Calu3 (cell line): ENCODE measurements at regions of chr22 and their contacts with region 1.

Region 1: DNA sequence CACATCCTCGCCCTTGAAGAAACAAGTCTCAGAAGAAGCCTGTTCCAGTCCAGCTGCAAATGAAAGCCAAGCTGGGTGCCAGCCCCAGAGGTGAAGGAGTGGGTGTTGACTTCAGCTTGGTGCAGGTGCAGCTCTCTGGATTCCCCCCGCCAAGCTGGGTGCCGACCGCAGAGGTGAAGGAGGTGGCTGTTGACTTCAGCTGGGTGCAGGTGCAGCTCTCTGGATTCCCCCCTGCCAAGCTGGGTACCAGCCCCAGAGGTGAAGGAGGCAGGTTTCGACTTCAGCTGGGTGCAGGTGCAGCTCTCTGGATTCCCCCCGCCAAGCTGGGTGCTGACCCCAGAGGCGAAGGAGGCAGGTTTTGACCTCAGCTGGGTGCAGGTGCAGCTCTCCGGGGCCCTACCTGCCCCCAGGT is 1234.0 kb downstream of the TBC1D22A start:
- DNase-seq: no peak
- H3K4me3 Mint-ChIP-seq: no peak overlapping the region
- H3K27ac Mint-ChIP-seq: no peak overlapping the region
- H3K4me1 Mint-ChIP-seq: no peaks in the 10 kb centered on the region
- H3K27me3 Mint-ChIP-seq: no peaks in the 10 kb centered on the region
- CTCF ChIP-seq: no peak

Region 2: GRCh38 chr22:47928631-47929030 is 67.8 kb before region 1 on chr22:
- CTCF ChIA-PET with region 1: no interaction called
- intact Hi-C with region 1: no loop called
- DNase-seq: no peak
- H3K4me3 Mint-ChIP-seq: no peak overlapping the region
- H3K27ac Mint-ChIP-seq: no peak overlapping the region
- H3K4me1 Mint-ChIP-seq: no peaks in the 10 kb centered on the region
- H3K27me3 Mint-ChIP-seq: no peaks in the 10 kb centered on the region
- CTCF ChIP-seq: no peak

Region 3: DNA sequence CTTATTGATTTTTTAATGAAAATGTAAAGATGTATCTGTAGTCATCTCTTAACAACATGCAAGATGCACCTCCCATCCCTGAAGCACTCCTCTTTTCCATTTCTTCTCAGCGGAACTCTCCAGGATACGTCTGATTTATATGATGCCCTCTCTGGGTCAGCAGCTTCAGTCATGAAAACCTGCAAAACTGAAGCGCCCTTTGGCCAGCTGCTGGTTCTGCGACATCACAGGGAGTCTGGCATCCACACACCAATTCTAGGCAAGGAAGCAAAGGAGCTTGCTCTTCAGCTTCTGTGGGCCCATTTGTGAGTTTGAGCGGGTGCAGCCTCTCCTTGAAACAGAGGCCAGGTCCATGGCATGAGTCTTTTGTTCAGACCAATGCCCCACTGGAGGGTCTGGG is 19.2 kb after region 1 on chr22:
- CTCF ChIA-PET with region 1: no interaction called
- intact Hi-C with region 1: no loop called
- DNase-seq: no peak
- H3K4me3 Mint-ChIP-seq: no peak overlapping the region
- H3K27ac Mint-ChIP-seq: no peak overlapping the region
- H3K4me1 Mint-ChIP-seq: no peaks in the 10 kb centered on the region
- H3K27me3 Mint-ChIP-seq: no peaks in the 10 kb centered on the region
- CTCF ChIP-seq: no peak

Region 4: GRCh38 chr22:48079505-48080290 is 83.2 kb after region 1 on chr22:
- CTCF ChIA-PET with region 1: interaction called, 10 read pairs
- intact Hi-C with region 1: no loop called
- DNase-seq: no peak
- H3K4me3 Mint-ChIP-seq: no peak overlapping the region
- H3K27ac Mint-ChIP-seq: no peak overlapping the region
- H3K4me1 Mint-ChIP-seq: no peaks in the 10 kb centered on the region
- H3K27me3 Mint-ChIP-seq: no peaks in the 10 kb centered on the region
- CTCF ChIP-seq: no peak

Region 5: GRCh38 chr22:48198489-48199459 is 202.3 kb after region 1 on chr22:
- CTCF ChIA-PET with region 1: no interaction called
- intact Hi-C with region 1: no loop called
- DNase-seq: no peak
- H3K4me3 Mint-ChIP-seq: no peak overlapping the region
- H3K27ac Mint-ChIP-seq: no peak overlapping the region
- H3K4me1 Mint-ChIP-seq: no peaks in the 10 kb centered on the region
- H3K27me3 Mint-ChIP-seq: no peaks in the 10 kb centered on the region
- CTCF ChIP-seq: no peak